Naive thymus-derived CD4-positive, alpha-beta T cell (primary cell): ENCODE measurements at regions of chr16 and their contacts with region 1.

Region 1: GRCh38 chr16:22297114-22297878 is at the start of gene POLR3E:
- DNase-seq: peak; percentile 98 to 100 (median 100)
- ATAC-seq: peak; percentile 94
- H3K4me3 ChIP-seq: peak within 1 kb of the TSS; percentile 66
- H3K4me3 Mint-ChIP-seq: peak within 1 kb of the TSS; percentile 90 to 98 (median 95)
- H3K27ac ChIP-seq: peak within 1 kb of the TSS; percentile 99
- H3K27ac Mint-ChIP-seq: peak within 1 kb of the TSS; percentile 95 to 100 (median 99)
- H3K4me1 ChIP-seq: peaks cover 14 to 18% of the 10 kb centered on the region in 2 donors
- H3K4me1 Mint-ChIP-seq: peaks cover 27 to 49% (median 48%) of the 10 kb centered on the region in 7 donors
- H3K27me3 ChIP-seq: no peaks in the 10 kb centered on the region
- H3K27me3 Mint-ChIP-seq: peaks cover 0 to 8% (median 0%) of the 10 kb centered on the region in 5 donors
- total RNA-seq, gene POLR3E: 60.1 to 232 (median 112) TPM

Region 2: GRCh38 chr16:20741554-20742285 is 1555.6 kb before region 1 on chr16 and contains the start of gene THUMPD1:
- CTCF ChIA-PET with region 1: no interaction called
- POLR2A ChIA-PET with region 1: no interaction called
- intact Hi-C with region 1: loop called in 1 of 2 experiments (anchors 5 kb)
- DNase-seq: peak; percentile 88 to 97 (median 95)
- ATAC-seq: peak; percentile 97
- H3K4me3 ChIP-seq: peak within 1 kb of the TSS; percentile 100
- H3K4me3 Mint-ChIP-seq: peak within 1 kb of the TSS; percentile 93 to 98 (median 96)
- H3K27ac ChIP-seq: peak within 1 kb of the TSS; percentile 93
- H3K27ac Mint-ChIP-seq: peak within 1 kb of the TSS; percentile 90 to 99 (median 98)
- H3K4me1 ChIP-seq: peaks cover 12 to 25% of the 10 kb centered on the region in 2 donors
- H3K4me1 Mint-ChIP-seq: peaks cover 10 to 35% (median 26%) of the 10 kb centered on the region in 7 donors
- H3K27me3 ChIP-seq: no peaks in the 10 kb centered on the region
- H3K27me3 Mint-ChIP-seq: peaks cover 0 to 2% (median 0%) of the 10 kb centered on the region in 5 donors
- total RNA-seq, gene THUMPD1: 41.9 to 107 (median 72.5) TPM

Region 3: GRCh38 chr16:21599233-21600030 is 697.9 kb before region 1 on chr16 and contains the start of gene METTL9:
- CTCF ChIA-PET with region 1: no interaction called
- POLR2A ChIA-PET with region 1: no interaction called
- intact Hi-C with region 1: loop called in 1 of 2 experiments (anchors 2 kb)
- DNase-seq: peak; percentile 92 to 96 (median 94)
- ATAC-seq: peak; percentile 96
- H3K4me3 ChIP-seq: peak within 1 kb of the TSS; percentile 82
- H3K4me3 Mint-ChIP-seq: peak within 1 kb of the TSS; percentile 91 to 98 (median 94)
- H3K27ac ChIP-seq: peak within 1 kb of the TSS; percentile 91
- H3K27ac Mint-ChIP-seq: peak within 1 kb of the TSS; percentile 86 to 99 (median 96)
- H3K4me1 ChIP-seq: peaks cover 21 to 32% of the 10 kb centered on the region in 2 donors
- H3K4me1 Mint-ChIP-seq: peaks cover 45 to 70% (median 54%) of the 10 kb centered on the region in 7 donors
- H3K27me3 ChIP-seq: no peaks in the 10 kb centered on the region
- H3K27me3 Mint-ChIP-seq: no peaks in the 10 kb centered on the region
- total RNA-seq, gene METTL9: 68.4 to 128 (median 80.1) TPM

Region 4: DNA sequence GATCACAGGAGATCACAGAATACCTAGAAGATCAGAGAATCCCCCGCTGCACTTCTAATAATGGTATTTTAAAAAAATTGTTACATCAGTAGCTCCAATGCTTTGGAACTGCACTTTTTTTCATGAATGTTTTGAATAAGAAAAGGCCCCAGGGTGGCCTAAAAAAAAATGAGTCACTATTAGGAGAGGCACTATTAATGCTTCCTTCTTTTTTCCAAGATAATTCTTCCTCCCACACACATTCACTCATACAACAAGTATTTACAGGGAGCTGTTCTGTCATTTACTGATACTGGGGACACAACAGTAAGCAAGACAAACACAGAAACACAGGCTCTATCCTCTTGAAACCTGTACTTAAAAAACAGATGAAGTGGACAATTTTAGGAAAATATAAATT is 295.7 kb before region 1 on chr16:
- CTCF ChIA-PET with region 1: interaction called, 7 read pairs
- POLR2A ChIA-PET with region 1: interaction called, 5 read pairs
- intact Hi-C with region 1: loop called (anchors 1 to 2 kb)
- DNase-seq: no peak
- ATAC-seq: no peak
- H3K4me3 ChIP-seq: no peak overlapping the region
- H3K4me3 Mint-ChIP-seq: peak overlapping the region in 2 of 10 donors; percentile 26 to 59
- H3K27ac ChIP-seq: no peak overlapping the region
- H3K27ac Mint-ChIP-seq: peak overlapping the region in 2 of 9 donors; percentile 13 to 65
- H3K4me1 ChIP-seq: peaks cover 0 to 9% of the 10 kb centered on the region in 2 donors
- H3K4me1 Mint-ChIP-seq: peaks cover 6 to 21% (median 15%) of the 10 kb centered on the region in 7 donors
- H3K27me3 ChIP-seq: no peaks in the 10 kb centered on the region
- H3K27me3 Mint-ChIP-seq: peaks cover 0 to 7% (median 0%) of the 10 kb centered on the region in 5 donors

Region 5: GRCh38 chr16:22077700-22078313 is 219.5 kb before region 1 on chr16:
- CTCF ChIA-PET with region 1: interaction called, 3 read pairs
- POLR2A ChIA-PET with region 1: no interaction called
- intact Hi-C with region 1: loop called in 1 of 2 experiments (anchors 1 kb)
- DNase-seq: peak; percentile 43 to 73 (median 69)
- ATAC-seq: peak; percentile 87
- H3K4me3 ChIP-seq: no peak overlapping the region
- H3K4me3 Mint-ChIP-seq: no peak overlapping the region
- H3K27ac ChIP-seq: no peak overlapping the region
- H3K27ac Mint-ChIP-seq: peak overlapping the region in 1 of 9 donors; percentile 41
- H3K4me1 ChIP-seq: no peaks in the 10 kb centered on the region
- H3K4me1 Mint-ChIP-seq: peaks cover 0 to 5% (median 2%) of the 10 kb centered on the region in 7 donors
- H3K27me3 ChIP-seq: no peaks in the 10 kb centered on the region
- H3K27me3 Mint-ChIP-seq: no peaks in the 10 kb centered on the region

Region 6: GRCh38 chr16:22109258-22109898 is 187.9 kb before region 1 on chr16:
- CTCF ChIA-PET with region 1: no interaction called
- POLR2A ChIA-PET with region 1: no interaction called
- intact Hi-C with region 1: no loop called
- DNase-seq: no peak
- ATAC-seq: peak; percentile 27
- H3K4me3 ChIP-seq: no peak overlapping the region
- H3K4me3 Mint-ChIP-seq: no peak overlapping the region
- H3K27ac ChIP-seq: no peak overlapping the region
- H3K27ac Mint-ChIP-seq: peak overlapping the region in 3 of 9 donors; percentile 6 to 42 (median 9)
- H3K4me1 ChIP-seq: no peaks in the 10 kb centered on the region
- H3K4me1 Mint-ChIP-seq: peaks cover 0 to 5% (median 0%) of the 10 kb centered on the region in 7 donors
- H3K27me3 ChIP-seq: no peaks in the 10 kb centered on the region
- H3K27me3 Mint-ChIP-seq: peaks cover 0 to 27% (median 5%) of the 10 kb centered on the region in 5 donors

Region 7: GRCh38 chr16:22206013-22206841 is 91.1 kb before region 1 on chr16 and contains the start of gene EEF2K:
- CTCF ChIA-PET with region 1: interaction called, 10 read pairs
- POLR2A ChIA-PET with region 1: interaction called, 15 read pairs
- intact Hi-C with region 1: loop called (anchors 1 kb)
- DNase-seq: peak; percentile 44 to 83 (median 66)
- ATAC-seq: peak; percentile 94
- H3K4me3 ChIP-seq: peak within 1 kb of the TSS; percentile 72
- H3K4me3 Mint-ChIP-seq: peak within 1 kb of the TSS; percentile 87 to 99 (median 96)
- H3K27ac ChIP-seq: peak within 1 kb of the TSS; percentile 80
- H3K27ac Mint-ChIP-seq: peak within 1 kb of the TSS; percentile 66 to 94 (median 85)
- H3K4me1 ChIP-seq: peaks cover 9 to 13% of the 10 kb centered on the region in 2 donors
- H3K4me1 Mint-ChIP-seq: peaks cover 14 to 56% (median 28%) of the 10 kb centered on the region in 7 donors
- H3K27me3 ChIP-seq: no peaks in the 10 kb centered on the region
- H3K27me3 Mint-ChIP-seq: no peaks in the 10 kb centered on the region
- total RNA-seq, gene EEF2K: 15.3 to 27.9 (median 21.8) TPM

Region 8: DNA sequence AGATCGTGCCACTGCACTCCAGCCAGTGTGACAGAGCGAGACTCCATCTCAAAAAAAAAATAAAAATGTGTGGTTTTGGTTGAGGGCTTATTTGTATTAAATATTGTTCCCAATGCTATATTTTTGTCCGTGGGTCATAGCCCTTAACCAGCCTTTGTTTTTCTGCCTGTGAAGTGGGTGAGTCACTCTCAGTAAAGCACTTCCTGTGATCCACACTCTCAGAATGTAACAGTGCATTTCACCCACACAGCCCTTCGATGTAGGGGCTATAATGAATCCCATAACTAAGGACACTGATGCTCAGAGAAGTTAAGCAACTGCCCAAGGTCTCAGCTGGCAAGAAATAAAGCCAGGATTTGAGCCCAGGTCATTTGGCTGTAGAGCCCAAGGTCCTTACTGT is 34.8 kb before region 1 on chr16:
- CTCF ChIA-PET with region 1: no interaction called
- POLR2A ChIA-PET with region 1: no interaction called
- intact Hi-C with region 1: no loop called
- DNase-seq: no peak
- ATAC-seq: no peak
- H3K4me3 ChIP-seq: no peak overlapping the region
- H3K4me3 Mint-ChIP-seq: no peak overlapping the region
- H3K27ac ChIP-seq: no peak overlapping the region
- H3K27ac Mint-ChIP-seq: peak overlapping the region in 3 of 9 donors; percentile 32 to 47 (median 46)
- H3K4me1 ChIP-seq: peaks cover 0 to 7% of the 10 kb centered on the region in 2 donors
- H3K4me1 Mint-ChIP-seq: peaks cover 10 to 36% (median 17%) of the 10 kb centered on the region in 7 donors
- H3K27me3 ChIP-seq: no peaks in the 10 kb centered on the region
- H3K27me3 Mint-ChIP-seq: no peaks in the 10 kb centered on the region

Region 9: DNA sequence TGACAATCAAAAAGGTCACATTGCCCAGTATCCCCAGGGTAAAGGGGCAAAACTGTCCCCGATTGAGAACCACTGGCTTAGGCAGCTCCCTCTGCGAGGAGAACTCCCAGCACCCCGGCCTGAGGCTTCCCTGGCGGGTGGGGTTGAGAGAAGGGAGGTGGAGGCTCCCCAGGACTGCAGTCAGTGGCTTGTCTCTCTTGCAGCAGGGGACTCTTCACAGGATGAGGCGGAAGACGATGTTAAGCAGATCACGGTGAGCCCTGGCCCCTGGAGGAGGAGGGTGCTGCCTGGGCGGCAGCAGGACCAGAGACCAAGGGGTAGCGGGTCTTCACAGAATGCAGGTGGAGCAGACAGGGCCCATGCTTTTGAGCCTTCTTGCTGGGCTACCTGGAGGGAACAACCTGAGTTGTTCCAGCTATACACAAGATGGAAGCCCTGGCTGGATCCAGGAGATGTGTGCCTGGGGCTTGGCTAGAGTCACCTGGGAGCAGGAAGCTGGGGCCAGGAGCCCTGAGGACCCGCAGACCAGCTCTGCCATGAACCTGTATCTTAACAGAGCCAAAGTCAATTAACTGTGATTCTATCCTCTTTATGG is 16.7 kb after region 1 on chr16:
- CTCF ChIA-PET with region 1: no interaction called
- POLR2A ChIA-PET with region 1: no interaction called
- intact Hi-C with region 1: no loop called
- DNase-seq: peak in 1 of 9 donors; percentile 17
- ATAC-seq: no peak
- H3K4me3 ChIP-seq: no peak overlapping the region
- H3K4me3 Mint-ChIP-seq: no peak overlapping the region
- H3K27ac ChIP-seq: no peak overlapping the region
- H3K27ac Mint-ChIP-seq: peak overlapping the region in 4 of 9 donors; percentile 41 to 82 (median 52)
- H3K4me1 ChIP-seq: no peaks in the 10 kb centered on the region
- H3K4me1 Mint-ChIP-seq: peaks cover 0 to 7% (median 0%) of the 10 kb centered on the region in 7 donors
- H3K27me3 ChIP-seq: no peaks in the 10 kb centered on the region
- H3K27me3 Mint-ChIP-seq: no peaks in the 10 kb centered on the region

Region 10: DNA sequence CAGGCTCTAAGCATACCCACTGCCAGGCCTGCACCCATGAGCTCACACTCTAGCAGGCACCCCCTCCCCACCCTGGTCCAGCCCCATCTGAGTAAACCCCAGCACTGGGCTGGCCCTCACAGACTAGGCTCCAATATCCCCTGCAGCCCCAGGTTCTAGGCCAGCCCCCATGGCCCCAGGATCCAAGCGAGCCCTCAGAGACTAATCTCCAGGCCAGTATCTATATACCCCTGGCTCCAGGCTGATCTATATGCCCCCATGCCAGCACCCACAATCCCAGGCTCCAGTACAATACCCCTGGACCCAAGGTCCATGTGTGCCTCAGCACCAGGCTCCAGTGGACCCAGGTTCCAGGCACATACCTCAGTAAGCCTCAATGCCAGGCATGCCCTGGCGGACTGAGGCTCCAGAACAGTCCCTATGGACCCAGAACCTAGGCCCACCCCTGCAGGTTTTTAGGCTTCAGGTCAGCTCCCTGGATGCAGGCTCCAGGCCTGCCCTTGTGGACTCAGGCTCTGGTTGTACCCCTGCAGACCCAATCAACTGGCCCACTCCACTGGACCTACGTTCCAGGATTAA is 38.5 kb after region 1 on chr16:
- CTCF ChIA-PET with region 1: no interaction called
- POLR2A ChIA-PET with region 1: no interaction called
- intact Hi-C with region 1: no loop called
- DNase-seq: no peak
- ATAC-seq: peak; percentile 26
- H3K4me3 ChIP-seq: no peak overlapping the region
- H3K4me3 Mint-ChIP-seq: peak overlapping the region in 1 of 10 donors; percentile 6
- H3K27ac ChIP-seq: no peak overlapping the region
- H3K27ac Mint-ChIP-seq: peak overlapping the region in 5 of 9 donors; percentile 43 to 58 (median 50)
- H3K4me1 ChIP-seq: no peaks in the 10 kb centered on the region
- H3K4me1 Mint-ChIP-seq: peaks cover 2 to 24% (median 10%) of the 10 kb centered on the region in 7 donors
- H3K27me3 ChIP-seq: no peaks in the 10 kb centered on the region
- H3K27me3 Mint-ChIP-seq: no peaks in the 10 kb centered on the region

Region 11: GRCh38 chr16:22374311-22375116 is 77.2 kb after region 1 on chr16 and contains the start of gene CDR2:
- CTCF ChIA-PET with region 1: interaction called, 3 read pairs
- POLR2A ChIA-PET with region 1: no interaction called
- intact Hi-C with region 1: loop called in 1 of 2 experiments (anchors 1 kb)
- DNase-seq: peak; percentile 94 to 99 (median 98)
- ATAC-seq: peak; percentile 97
- H3K4me3 ChIP-seq: peak within 1 kb of the TSS; percentile 77
- H3K4me3 Mint-ChIP-seq: peak within 1 kb of the TSS; percentile 93 to 99 (median 98)
- H3K27ac ChIP-seq: peak within 1 kb of the TSS; percentile 86
- H3K27ac Mint-ChIP-seq: peak within 1 kb of the TSS; percentile 91 to 98 (median 93)
- H3K4me1 ChIP-seq: peaks cover 31 to 34% of the 10 kb centered on the region in 2 donors
- H3K4me1 Mint-ChIP-seq: peaks cover 17 to 56% (median 48%) of the 10 kb centered on the region in 7 donors
- H3K27me3 ChIP-seq: no peaks in the 10 kb centered on the region
- H3K27me3 Mint-ChIP-seq: peaks cover 0 to 5% (median 0%) of the 10 kb centered on the region in 5 donors
- total RNA-seq, gene CDR2: 28.7 to 91.9 (median 65.6) TPM